ENCODE measurements at regions of chr9 and their contacts with region 1.

Region 1: DNA sequence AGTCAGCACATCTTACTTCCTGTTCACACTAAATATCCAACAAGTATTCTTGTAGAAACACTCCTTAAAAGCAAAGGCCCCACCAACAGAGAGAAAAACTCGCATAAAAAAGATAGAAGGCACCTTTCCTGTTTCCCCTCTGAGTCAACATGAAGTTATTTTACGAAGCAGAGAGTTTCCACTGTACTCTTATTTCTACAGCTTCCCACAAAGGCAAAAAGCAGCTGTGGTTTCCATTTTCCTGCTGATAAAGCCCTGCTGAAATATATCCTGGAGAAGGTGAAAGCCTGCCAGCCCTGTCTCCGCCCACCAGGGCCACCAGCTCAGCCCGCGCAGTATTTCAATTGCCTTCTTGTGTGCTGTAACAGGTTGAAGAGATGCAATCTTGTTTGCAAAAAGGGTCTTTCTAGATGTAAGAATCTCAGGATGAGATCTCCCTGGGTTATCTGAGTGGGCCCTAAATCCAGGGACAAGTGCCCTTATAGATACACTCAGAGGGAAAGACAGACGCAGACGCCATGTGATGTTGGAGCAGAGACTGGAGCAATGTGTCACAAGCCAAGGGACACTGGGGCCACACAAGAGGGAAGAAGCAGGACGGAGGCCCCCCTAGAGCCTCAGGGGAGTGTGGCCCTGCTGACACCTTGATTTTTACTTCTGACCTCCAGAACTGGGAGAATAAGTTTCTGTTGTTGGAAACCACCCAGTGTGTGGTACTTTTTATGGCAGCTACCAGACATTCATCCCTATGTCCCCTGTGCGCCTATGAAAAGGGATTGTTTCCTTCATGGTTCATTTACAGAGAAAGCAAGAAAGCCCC is 19.9 kb downstream of the SEMA4D start:
- DNase-seq: no peak
- H3K4me3 ChIP-seq: no peak overlapping the region
- H3K27ac ChIP-seq: no peak overlapping the region
- H3K4me1 ChIP-seq: no peaks in the 10 kb centered on the region
- H3K27me3 ChIP-seq: no peaks in the 10 kb centered on the region
- CTCF ChIP-seq: no peak
- POLR2A ChIP-seq: no peak

Region 2: GRCh38 chr9:89455356-89455824 is 22.6 kb before region 1 on chr9:
- intact Hi-C with region 1: loop called (anchors 2 kb)
- DNase-seq: no peak
- H3K4me3 ChIP-seq: no peak overlapping the region
- H3K27ac ChIP-seq: no peak overlapping the region
- H3K4me1 ChIP-seq: peaks cover 0 to 6% of the 10 kb centered on the region in 2 donors
- H3K27me3 ChIP-seq: no peaks in the 10 kb centered on the region
- CTCF ChIP-seq: no peak
- POLR2A ChIP-seq: no peak

Measured in thyroid gland (tissue), 4 donors.